ENCODE measurements at regions of chr7 and their contacts with region 1.

Region 1: GRCh38 chr7:104923010-104923421 is 91.0 kb upstream of the KMT2E start:
- DNase-seq: peak; percentile 59
- H3K4me3 ChIP-seq: no peak overlapping the region
- H3K27ac ChIP-seq: no peak overlapping the region
- H3K27me3 ChIP-seq: no peaks in the 10 kb centered on the region
- CTCF ChIP-seq: peak; percentile 83

Region 2: DNA sequence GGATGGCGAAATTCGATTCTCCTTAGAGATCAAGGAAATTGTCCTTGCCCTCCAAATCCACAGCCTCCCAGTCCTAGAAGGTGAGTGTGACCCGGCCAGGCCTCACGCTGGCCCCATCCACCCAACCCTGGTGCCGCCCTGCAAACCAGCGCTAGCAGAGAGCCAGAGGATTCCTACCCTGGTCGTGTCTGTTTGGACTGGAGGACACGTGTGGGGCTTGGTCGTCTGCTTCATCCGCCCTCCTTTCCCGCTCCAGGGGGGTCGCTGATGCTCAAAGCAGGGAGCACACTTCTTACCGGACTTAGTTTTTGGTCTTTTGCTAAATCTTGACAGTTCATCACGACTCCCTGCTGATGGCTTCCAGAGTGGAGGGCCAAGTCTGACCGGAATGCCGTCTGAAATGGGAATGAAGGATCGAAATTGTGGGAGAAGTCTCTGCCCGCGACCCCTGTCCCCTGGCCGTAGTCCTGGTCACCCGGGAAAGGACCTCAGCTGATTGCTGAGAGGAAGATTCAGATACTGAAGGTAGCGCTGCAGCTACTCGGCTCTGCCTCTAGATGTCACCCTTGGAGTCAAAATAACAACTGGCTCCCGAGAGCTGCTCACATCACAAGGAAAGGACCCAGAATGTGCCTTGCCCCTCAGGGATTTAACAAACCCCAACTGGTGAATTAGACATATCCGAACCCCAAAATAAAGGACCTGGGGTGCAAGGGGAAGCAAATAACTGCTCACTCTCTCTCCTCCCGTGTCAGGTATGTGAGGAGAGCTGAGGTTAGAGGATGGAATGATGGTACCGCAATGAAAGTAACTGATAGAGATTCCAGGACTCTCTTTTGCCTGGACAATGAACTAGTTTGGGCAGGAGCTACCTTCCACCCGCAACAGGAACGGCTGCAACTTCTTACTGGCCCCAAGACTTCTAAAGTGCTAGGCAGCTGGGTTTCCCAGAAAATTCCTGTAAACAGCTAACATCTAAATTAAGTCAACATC is 691.7 kb before region 1 on chr7:
- CTCF ChIA-PET with region 1: interaction called, 30 read pairs
- POLR2A ChIA-PET with region 1: interaction called, 14 read pairs
- DNase-seq: peak; percentile 30
- H3K4me3 ChIP-seq: peak overlapping the region; percentile 38
- H3K27ac ChIP-seq: no peak overlapping the region
- H3K27me3 ChIP-seq: peaks cover 6% of the 10 kb centered on the region
- CTCF ChIP-seq: peak; percentile 93

Region 3: GRCh38 chr7:104603957-104604356 is 319.1 kb before region 1 on chr7:
- CTCF ChIA-PET with region 1: no interaction called
- POLR2A ChIA-PET with region 1: no interaction called
- DNase-seq: no peak
- H3K4me3 ChIP-seq: no peak overlapping the region
- H3K27ac ChIP-seq: no peak overlapping the region
- H3K27me3 ChIP-seq: no peaks in the 10 kb centered on the region
- CTCF ChIP-seq: no peak

Region 4: GRCh38 chr7:104643587-104644217 is 279.3 kb before region 1 on chr7:
- CTCF ChIA-PET with region 1: interaction called, 55 read pairs
- POLR2A ChIA-PET with region 1: no interaction called
- DNase-seq: no peak
- H3K4me3 ChIP-seq: no peak overlapping the region
- H3K27ac ChIP-seq: no peak overlapping the region
- H3K27me3 ChIP-seq: no peaks in the 10 kb centered on the region
- CTCF ChIP-seq: peak; percentile 60

Region 5: DNA sequence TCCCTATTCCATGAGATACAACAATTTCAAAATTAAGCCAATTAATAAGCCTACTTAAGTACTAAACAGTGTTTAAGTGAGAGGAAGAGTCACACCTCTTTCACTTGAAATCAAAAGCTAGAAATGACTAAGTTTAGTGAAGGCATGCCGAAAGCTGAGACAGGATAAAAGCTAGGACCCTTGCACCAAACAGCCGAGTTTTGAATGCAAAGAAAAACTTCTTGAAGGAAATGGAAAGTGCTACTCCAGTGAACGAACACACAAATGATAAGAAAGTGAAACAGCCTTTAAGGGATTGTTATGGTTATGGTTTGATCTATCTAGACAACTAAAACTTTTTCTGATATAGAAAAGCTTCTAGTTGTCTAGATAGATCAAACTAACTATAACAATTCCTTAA is 44.4 kb before region 1 on chr7:
- CTCF ChIA-PET with region 1: interaction called, 311 read pairs
- POLR2A ChIA-PET with region 1: no interaction called
- DNase-seq: no peak
- H3K4me3 ChIP-seq: no peak overlapping the region
- H3K27ac ChIP-seq: no peak overlapping the region
- H3K27me3 ChIP-seq: peaks cover 3% of the 10 kb centered on the region
- CTCF ChIP-seq: no peak

Region 6: GRCh38 chr7:104900525-104901239 is 22.3 kb before region 1 on chr7:
- CTCF ChIA-PET with region 1: interaction called, 10 read pairs
- POLR2A ChIA-PET with region 1: no interaction called
- DNase-seq: no peak
- H3K4me3 ChIP-seq: no peak overlapping the region
- H3K27ac ChIP-seq: no peak overlapping the region
- H3K27me3 ChIP-seq: peaks cover 8% of the 10 kb centered on the region
- CTCF ChIP-seq: no peak

Region 7: DNA sequence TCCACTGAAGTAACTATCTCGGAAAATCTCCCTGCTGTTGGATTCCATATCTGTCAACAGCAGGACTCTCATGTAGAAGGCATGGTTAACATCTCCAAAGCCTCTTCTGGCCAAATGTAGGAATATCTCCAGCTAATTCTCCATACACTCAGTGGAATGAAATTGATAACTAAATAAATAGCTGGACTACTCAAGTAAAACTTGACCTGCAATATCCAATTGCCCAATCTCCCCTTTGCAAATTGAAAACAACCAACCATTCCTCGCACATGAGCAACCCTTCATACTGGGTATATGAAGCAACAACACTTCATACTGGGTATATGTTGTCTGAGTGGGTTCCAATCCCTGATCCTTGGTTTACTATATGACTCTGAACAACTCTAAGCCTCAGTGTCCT is 14.4 kb before region 1 on chr7:
- CTCF ChIA-PET with region 1: interaction called, 15 read pairs
- POLR2A ChIA-PET with region 1: no interaction called
- DNase-seq: no peak
- H3K4me3 ChIP-seq: no peak overlapping the region
- H3K27ac ChIP-seq: no peak overlapping the region
- H3K27me3 ChIP-seq: peaks cover 10% of the 10 kb centered on the region
- CTCF ChIP-seq: no peak

Region 8: DNA sequence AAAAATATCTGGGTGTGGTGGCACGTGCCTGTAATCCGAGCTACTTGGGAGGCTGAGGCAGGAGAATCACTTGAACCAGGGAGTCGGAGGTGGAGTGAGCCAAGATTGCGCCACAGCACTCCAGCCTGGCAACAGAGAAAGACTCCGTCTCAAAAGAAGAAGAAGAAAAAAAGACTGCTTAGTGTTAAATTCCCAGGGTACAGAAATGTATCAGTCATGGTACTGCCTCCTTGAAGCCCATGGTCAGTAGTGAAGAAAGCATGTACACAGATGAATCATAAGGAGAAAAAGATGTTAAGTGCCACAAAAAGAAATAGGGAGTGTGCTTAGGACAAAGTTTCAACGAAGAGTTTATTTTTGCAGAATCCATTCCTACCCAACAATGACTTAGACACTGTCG is 28.5 kb after region 1 on chr7:
- CTCF ChIA-PET with region 1: no interaction called
- POLR2A ChIA-PET with region 1: no interaction called
- DNase-seq: no peak
- H3K4me3 ChIP-seq: no peak overlapping the region
- H3K27ac ChIP-seq: no peak overlapping the region
- H3K27me3 ChIP-seq: no peaks in the 10 kb centered on the region
- CTCF ChIP-seq: no peak

Region 9: DNA sequence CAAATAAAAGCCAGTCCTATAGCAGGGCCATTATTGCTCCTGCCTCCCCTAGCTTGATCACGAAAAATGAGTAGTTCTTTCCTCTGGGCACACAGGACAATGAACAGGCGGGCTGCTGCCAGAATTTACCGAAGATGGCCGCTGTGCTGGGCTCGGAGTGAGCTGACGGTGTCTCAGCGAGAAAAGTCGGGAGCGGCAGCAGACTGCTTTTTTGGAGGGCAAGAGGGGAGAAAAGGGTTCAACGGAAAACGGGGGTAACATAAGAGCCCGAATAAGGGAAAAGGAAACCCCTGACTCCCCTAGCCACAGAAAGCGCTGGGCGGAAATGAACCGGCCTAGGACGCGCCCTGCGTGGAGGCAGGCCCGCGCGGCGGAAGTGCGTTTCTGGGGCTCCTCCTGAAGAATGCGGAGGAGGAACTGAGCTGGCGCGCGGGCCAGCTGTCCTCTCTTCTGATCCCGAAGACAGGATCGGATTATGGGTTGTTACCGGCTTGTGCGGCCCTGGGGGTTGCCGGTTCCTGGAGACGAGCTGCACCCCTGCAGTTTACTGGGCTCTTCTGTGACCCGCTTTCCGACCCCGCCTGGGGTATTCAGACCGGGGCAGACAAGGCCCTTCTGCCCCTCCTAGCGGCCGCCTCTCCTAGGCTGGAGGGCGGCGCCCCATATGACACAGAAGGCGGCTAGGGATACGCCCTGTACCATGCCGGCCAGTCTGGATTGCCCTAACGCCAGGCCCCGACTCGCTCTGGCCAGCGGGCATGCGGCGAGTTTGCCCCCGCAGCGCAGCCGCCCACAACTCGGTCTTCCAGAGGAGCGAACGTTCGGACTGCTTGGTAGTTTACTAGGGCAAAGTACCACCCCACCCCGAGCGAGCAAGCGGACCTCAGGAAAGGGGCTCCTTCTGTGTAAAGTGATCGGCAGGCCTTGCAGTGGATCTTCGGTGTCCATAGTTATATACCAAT is 60.8 kb after region 1 on chr7:
- CTCF ChIA-PET with region 1: interaction called, 27 read pairs
- POLR2A ChIA-PET with region 1: no interaction called
- DNase-seq: no peak
- H3K4me3 ChIP-seq: peak overlapping the region; percentile 70
- H3K27ac ChIP-seq: peak overlapping the region; percentile 97
- H3K27me3 ChIP-seq: no peaks in the 10 kb centered on the region
- CTCF ChIP-seq: peak; percentile 58